Psoas muscle (tissue), 8 donors: ENCODE measurements at regions of chr10 and their contacts with region 1.

Region 1: DNA sequence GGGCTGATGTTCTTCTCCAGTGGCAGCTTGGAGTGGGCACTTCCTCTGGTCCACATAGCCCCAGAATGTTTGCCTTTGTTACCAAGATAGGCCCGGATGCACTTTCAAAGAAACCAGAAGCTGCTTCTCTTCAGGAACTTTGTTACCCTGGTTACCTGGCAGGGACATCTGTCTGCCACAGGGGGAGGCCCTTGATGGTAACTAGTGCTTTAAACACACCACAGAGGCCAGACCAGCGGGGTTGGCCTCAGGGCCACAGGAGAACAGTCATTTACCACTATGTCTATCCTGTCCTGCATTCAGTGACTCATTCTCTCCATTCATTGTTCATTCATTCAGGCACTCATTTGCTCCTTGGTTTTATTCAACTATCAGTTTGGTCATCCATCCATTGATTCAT is 11.9 kb upstream of the PLEKHA1 start:
- DNase-seq: no peak
- ATAC-seq: no peak
- H3K4me3 ChIP-seq: no peak overlapping the region
- H3K27ac ChIP-seq: no peak overlapping the region
- H3K4me1 ChIP-seq: no peaks in the 10 kb centered on the region
- H3K27me3 ChIP-seq: no peaks in the 10 kb centered on the region
- CTCF ChIP-seq: no peak

Region 2: GRCh38 chr10:122316224-122316884 is 46.3 kb before region 1 on chr10:
- intact Hi-C with region 1: no loop called
- DNase-seq: no peak
- ATAC-seq: no peak
- H3K4me3 ChIP-seq: no peak overlapping the region
- H3K27ac ChIP-seq: no peak overlapping the region
- H3K4me1 ChIP-seq: no peaks in the 10 kb centered on the region
- H3K27me3 ChIP-seq: no peaks in the 10 kb centered on the region
- CTCF ChIP-seq: no peak

Region 3: GRCh38 chr10:122326385-122326784 is 36.2 kb before region 1 on chr10:
- intact Hi-C with region 1: loop called in 1 of 2 experiments (anchors 2 kb)
- DNase-seq: no peak
- ATAC-seq: no peak
- H3K4me3 ChIP-seq: no peak overlapping the region
- H3K27ac ChIP-seq: no peak overlapping the region
- H3K4me1 ChIP-seq: no peaks in the 10 kb centered on the region
- H3K27me3 ChIP-seq: peaks cover 0 to 3% (median 0%) of the 10 kb centered on the region in 3 donors
- CTCF ChIP-seq: no peak

Region 4: GRCh38 chr10:122786269-122786668 is 423.6 kb after region 1 on chr10:
- intact Hi-C with region 1: loop called in 1 of 2 experiments (anchors 5 kb)
- DNase-seq: no peak
- ATAC-seq: no peak
- H3K4me3 ChIP-seq: no peak overlapping the region
- H3K27ac ChIP-seq: no peak overlapping the region
- H3K4me1 ChIP-seq: no peaks in the 10 kb centered on the region
- H3K27me3 ChIP-seq: peaks cover 0 to 2% (median 0%) of the 10 kb centered on the region in 3 donors
- CTCF ChIP-seq: no peak

Region 5: DNA sequence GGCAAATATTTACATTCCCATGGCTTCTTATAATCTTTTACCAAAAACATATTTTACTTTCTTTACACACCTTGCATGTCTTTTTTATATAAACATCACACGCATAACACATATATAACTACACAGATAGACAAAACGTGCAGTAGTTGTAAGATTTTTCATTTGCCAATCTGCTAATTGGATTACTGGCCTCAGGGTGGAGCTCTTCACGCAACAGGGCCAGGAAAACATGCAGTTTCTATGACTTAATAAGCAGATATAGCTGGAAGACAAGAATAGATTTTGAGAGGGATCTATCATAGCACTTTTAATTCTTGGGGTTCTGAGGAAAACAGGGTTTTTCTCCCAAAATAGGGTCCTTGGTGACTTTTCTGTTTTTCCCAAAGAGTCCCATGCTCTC is 658.9 kb after region 1 on chr10:
- intact Hi-C with region 1: no loop called
- DNase-seq: no peak
- ATAC-seq: no peak
- H3K4me3 ChIP-seq: no peak overlapping the region
- H3K27ac ChIP-seq: no peak overlapping the region
- H3K4me1 ChIP-seq: no peaks in the 10 kb centered on the region
- H3K27me3 ChIP-seq: no peaks in the 10 kb centered on the region
- CTCF ChIP-seq: no peak